ENCODE measurements at regions of chr3 and their contacts with region 1.

Region 1: GRCh38 chr3:12706504-12707253 is 42.8 kb upstream of the RAF1 start:
- DNase-seq: peak; percentile 53 to 77
- H3K4me3 ChIP-seq: no peak overlapping the region
- H3K27ac ChIP-seq: no peak overlapping the region
- H3K4me1 ChIP-seq: peaks cover 0 to 4% (median 0%) of the 10 kb centered on the region in 4 experiments; a peak in 2 of 7 replicates
- H3K27me3 ChIP-seq: no peaks in the 10 kb centered on the region
- CTCF ChIP-seq: peak; percentile 87 to 99 (median 99)
- EP300 ChIP-seq: no peak
- POLR2A ChIP-seq: no peak
- RAD21 ChIP-seq: peak; percentile 85 to 90

Region 2: GRCh38 chr3:12675016-12675810 is 31.5 kb before region 1 on chr3:
- CTCF ChIA-PET with region 1: interaction called, 17 read pairs
- POLR2A ChIA-PET with region 1: no interaction called
- DNase-seq: no peak
- H3K4me3 ChIP-seq: no peak overlapping the region
- H3K27ac ChIP-seq: no peak overlapping the region
- H3K4me1 ChIP-seq: peaks cover 8 to 13% (median 12%) of the 10 kb centered on the region in 4 experiments
- H3K27me3 ChIP-seq: no peaks in the 10 kb centered on the region
- CTCF ChIP-seq: no peak
- EP300 ChIP-seq: no peak
- POLR2A ChIP-seq: no peak
- RAD21 ChIP-seq: no peak

Region 3: GRCh38 chr3:12719984-12720898 is 13.6 kb after region 1 on chr3:
- CTCF ChIA-PET with region 1: interaction called, 29 read pairs
- POLR2A ChIA-PET with region 1: interaction called, 5 read pairs
- DNase-seq: peak; percentile 27 to 76
- H3K4me3 ChIP-seq: no peak overlapping the region
- H3K27ac ChIP-seq: no peak overlapping the region
- H3K4me1 ChIP-seq: no peaks in the 10 kb centered on the region
- H3K27me3 ChIP-seq: no peaks in the 10 kb centered on the region; a peak in 1 of 7 replicates
- CTCF ChIP-seq: peak; percentile 66 to 98 (median 84)
- EP300 ChIP-seq: no peak
- POLR2A ChIP-seq: no peak
- RAD21 ChIP-seq: peak; percentile 76 to 83

Region 4: GRCh38 chr3:12782172-12782815 is 75.6 kb after region 1 on chr3:
- CTCF ChIA-PET with region 1: interaction called, 11 read pairs
- POLR2A ChIA-PET with region 1: no interaction called
- DNase-seq: no peak
- H3K4me3 ChIP-seq: no peak overlapping the region
- H3K27ac ChIP-seq: no peak overlapping the region
- H3K4me1 ChIP-seq: peaks cover 0 to 4% (median 1%) of the 10 kb centered on the region in 4 experiments; a peak in 2 of 7 replicates
- H3K27me3 ChIP-seq: no peaks in the 10 kb centered on the region
- CTCF ChIP-seq: no peak
- EP300 ChIP-seq: no peak
- POLR2A ChIP-seq: 0 out of 3 replicates have a peak, but pooled peaks of 1 of the 2 experiments have one; percentile 26
- RAD21 ChIP-seq: no peak

Region 5: GRCh38 chr3:12822725-12823373 is 116.2 kb after region 1 on chr3:
- CTCF ChIA-PET with region 1: interaction called, 11 read pairs
- POLR2A ChIA-PET with region 1: no interaction called
- DNase-seq: no peak
- H3K4me3 ChIP-seq: no peak overlapping the region
- H3K27ac ChIP-seq: no peak overlapping the region
- H3K4me1 ChIP-seq: no peaks in the 10 kb centered on the region; a peak in 1 of 7 replicates
- H3K27me3 ChIP-seq: no peaks in the 10 kb centered on the region
- CTCF ChIP-seq: peak in 2 of 3 experiments; percentile 23 to 26; a peak in 2 of 4 replicates
- EP300 ChIP-seq: no peak
- POLR2A ChIP-seq: no peak
- RAD21 ChIP-seq: no peak; a peak in 1 of 4 replicates

Region 6: DNA sequence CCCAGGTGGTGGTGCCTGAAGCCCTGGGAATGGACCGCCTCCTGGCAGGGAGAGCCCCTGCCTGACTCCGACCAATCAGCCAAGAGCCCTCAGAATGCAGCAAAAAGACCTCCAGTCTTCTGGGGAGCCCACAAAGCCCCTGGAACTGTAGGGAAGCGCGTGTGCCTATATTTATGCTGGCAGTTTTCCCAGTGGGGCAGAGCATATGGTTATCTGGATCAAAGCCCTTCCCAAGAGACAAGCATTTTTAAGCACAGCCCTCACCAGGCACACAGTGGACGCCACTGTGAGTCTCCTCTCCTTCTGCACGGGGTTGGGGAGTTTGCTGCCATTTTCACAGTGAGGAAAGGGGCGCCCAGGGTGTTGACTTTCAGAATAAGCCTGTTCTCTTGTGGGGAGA is 215.6 kb after region 1 on chr3:
- CTCF ChIA-PET with region 1: no interaction called
- POLR2A ChIA-PET with region 1: no interaction called
- DNase-seq: no peak
- H3K4me3 ChIP-seq: no peak overlapping the region
- H3K27ac ChIP-seq: no peak overlapping the region
- H3K4me1 ChIP-seq: no peaks in the 10 kb centered on the region
- H3K27me3 ChIP-seq: no peaks in the 10 kb centered on the region
- CTCF ChIP-seq: no peak
- EP300 ChIP-seq: no peak
- POLR2A ChIP-seq: no peak
- RAD21 ChIP-seq: no peak

Region 7: DNA sequence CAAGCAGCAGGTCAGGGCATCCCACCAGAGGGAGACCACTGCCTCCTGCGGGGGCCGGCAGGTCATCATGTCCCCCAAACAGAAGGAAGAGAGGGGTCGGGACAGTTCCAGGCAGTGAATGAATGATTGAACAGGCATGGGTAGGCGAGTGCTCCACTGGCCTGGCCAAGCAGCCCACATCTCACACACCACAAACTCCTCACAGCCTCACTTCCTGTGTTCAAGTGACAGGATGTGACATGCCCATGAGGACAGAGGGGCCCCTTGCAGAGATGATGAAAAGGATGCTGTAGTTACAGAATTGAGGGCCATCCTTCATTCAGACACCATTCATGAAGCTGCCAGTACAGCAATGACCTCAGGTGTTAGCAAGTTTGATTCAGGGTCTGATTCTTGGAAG is 362.8 kb after region 1 on chr3:
- CTCF ChIA-PET with region 1: no interaction called
- POLR2A ChIA-PET with region 1: no interaction called
- DNase-seq: no peak
- H3K4me3 ChIP-seq: no peak overlapping the region
- H3K27ac ChIP-seq: no peak overlapping the region
- H3K4me1 ChIP-seq: peaks cover 0 to 13% (median 4%) of the 10 kb centered on the region in 4 experiments; a peak in 5 of 7 replicates
- H3K27me3 ChIP-seq: peaks cover 6 to 24% (median 20%) of the 10 kb centered on the region in 4 experiments
- CTCF ChIP-seq: no peak
- EP300 ChIP-seq: no peak
- POLR2A ChIP-seq: no peak
- RAD21 ChIP-seq: no peak

Measured in H1 (cell line).